ENCODE measurements at regions of chr9 and their contacts with region 1.

Region 1: DNA sequence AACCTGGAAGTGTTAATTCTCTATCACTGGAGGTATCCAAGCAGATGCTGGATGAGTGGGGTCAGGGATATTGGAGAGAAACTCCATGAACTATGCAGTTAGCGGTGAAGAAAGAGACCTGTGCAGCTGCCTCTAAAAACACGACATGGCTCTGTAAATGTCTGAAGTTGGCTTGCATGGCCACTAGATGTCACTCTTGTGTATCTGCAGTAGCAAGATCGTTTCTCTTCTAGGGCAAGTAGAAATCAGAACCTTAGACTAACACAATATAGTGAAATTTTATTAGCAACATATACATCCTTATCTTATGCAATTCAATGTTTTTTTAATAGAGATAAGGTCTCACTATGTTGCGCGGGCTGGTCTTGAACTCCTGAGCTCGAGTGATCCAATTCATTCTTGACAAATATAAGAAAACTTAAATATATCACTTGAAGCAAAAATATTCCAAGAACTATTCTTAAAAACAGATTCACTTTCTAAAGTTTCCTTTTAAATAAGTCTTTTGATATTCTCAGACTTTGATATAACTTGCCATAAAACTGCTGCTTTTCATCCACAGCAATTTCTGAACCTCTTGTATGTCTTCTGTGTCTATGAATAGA is 2.9 kb downstream of the OR2S2 start:
- DNase-seq: no peak
- ATAC-seq: peak; percentile 75
- H3K4me3 Mint-ChIP-seq: no peak overlapping the region
- H3K27ac Mint-ChIP-seq: no peak overlapping the region
- H3K4me1 Mint-ChIP-seq: no peaks in the 10 kb centered on the region
- H3K27me3 Mint-ChIP-seq: peaks cover 22% of the 10 kb centered on the region
- CTCF ChIP-seq: peak; percentile 86

Region 2: DNA sequence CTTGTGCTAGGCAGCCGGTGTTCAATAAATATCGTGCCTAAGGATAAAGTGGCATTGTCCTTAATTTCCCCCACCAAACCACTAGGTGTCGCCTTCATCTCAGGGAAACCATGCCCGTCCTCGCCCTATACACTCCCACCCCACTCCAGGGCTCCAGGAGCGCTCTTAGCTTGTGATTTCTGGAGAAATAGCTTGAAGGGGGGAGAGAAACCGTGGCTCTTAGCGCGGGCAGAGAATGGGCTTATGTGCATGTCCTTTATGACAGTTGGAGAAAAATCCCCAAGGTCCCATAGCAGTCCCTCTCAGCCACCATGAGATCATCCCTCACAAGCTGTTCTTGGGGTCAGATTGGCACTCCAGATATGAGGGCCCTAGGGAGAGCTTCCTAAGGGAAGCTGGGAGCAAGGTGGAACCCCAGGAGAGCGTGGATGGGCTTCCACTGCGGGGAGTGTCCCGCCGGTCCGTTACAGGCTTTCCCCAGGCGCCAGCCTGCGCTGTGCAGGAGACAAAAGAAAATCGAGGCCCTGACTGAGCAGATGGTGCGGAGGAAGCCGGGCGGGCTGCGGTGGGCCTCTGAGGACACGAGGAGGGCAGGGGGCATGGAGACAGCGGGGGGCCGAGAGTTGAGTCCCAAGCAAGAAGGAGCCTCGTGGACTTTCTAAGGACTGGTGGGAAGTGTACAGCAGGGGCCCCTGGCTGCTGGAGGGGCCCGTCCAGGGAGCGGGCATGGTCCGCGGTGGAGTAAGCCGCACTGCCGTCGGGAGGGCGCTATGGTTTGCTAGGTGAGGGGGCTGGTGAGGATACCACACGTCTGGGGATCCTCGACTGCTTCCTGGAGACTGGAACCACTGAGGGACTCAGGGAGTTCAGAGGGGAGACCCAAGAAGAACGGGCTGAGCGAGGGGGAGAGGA is 164.4 kb before region 1 on chr9:
- CTCF ChIA-PET with region 1: no interaction called
- POLR2A ChIA-PET with region 1: no interaction called
- intact Hi-C with region 1: no loop called
- DNase-seq: no peak
- ATAC-seq: peak; percentile 92
- H3K4me3 Mint-ChIP-seq: peak overlapping the region; percentile 58
- H3K27ac Mint-ChIP-seq: no peak overlapping the region
- H3K4me1 Mint-ChIP-seq: peaks cover 10% of the 10 kb centered on the region
- H3K27me3 Mint-ChIP-seq: peaks cover 5% of the 10 kb centered on the region
- CTCF ChIP-seq: no peak

Region 3: DNA sequence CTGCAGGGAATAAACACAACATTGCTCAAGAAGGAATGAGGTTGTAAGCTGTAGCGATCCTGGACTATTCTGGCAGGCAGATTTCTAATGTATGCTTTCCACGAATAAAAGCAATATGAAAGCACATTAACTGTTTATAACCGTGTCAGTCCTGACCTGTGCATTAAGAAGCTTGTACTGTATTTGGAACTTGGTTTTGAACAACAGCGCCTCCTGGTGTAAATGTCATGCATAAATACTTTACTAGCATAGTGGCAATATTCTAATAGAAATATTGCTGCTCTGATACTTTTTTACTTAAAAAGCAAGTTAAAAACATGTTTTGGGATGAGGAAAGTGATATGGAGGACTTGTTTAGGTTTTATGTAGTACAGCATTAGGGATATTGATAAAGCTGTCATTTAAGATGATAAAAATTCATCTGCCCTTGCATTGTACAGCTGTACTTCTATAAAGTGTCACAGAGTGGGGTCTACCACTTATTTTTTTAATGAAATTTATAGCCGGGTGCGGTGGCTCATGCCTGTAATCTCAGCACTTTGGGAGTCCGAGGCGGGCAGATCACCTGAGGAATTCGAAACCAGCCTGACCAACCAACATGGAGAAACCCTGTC is 373.9 kb after region 1 on chr9:
- CTCF ChIA-PET with region 1: interaction called, 3 read pairs
- POLR2A ChIA-PET with region 1: no interaction called
- intact Hi-C with region 1: loop called (anchors 1 kb)
- DNase-seq: no peak
- ATAC-seq: peak; percentile 77
- H3K4me3 Mint-ChIP-seq: no peak overlapping the region
- H3K27ac Mint-ChIP-seq: no peak overlapping the region
- H3K4me1 Mint-ChIP-seq: peaks cover 2% of the 10 kb centered on the region
- H3K27me3 Mint-ChIP-seq: no peaks in the 10 kb centered on the region
- CTCF ChIP-seq: peak; percentile 65